HepG2 (cell line): ENCODE measurements at regions of chr3 and their contacts with region 1.

Region 1: DNA sequence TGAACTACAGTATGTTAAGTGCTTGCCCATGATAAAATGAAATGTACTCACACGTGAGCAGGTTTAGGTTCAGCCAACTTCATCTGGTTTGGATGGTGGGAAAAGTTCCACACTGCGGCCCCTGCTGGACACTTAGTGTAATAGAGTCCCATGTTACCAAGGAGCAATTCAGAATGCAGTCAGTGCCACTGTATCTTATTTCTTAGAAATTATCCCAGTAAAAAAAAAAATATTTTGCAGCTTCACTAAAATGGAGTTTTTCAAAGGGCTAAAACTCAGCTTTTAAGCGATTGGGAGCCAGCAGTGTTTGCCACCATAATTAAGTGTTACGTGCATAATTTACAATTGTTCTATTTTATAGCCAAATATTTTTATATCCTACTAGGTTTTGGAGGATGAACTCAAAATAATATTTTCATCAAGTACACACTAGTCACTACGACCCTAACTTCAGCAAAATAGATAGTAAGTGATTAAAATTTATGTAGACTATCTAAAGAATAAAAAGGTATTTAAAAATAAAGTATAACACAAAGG is 371.7 kb upstream of the GBE1 start:
- DNase-seq: peak; percentile 42
- ATAC-seq: peak; percentile 90
- H3K4me3 ChIP-seq: no peak overlapping the region
- H3K27ac ChIP-seq: no peak overlapping the region
- H3K4me1 ChIP-seq: peaks cover 12% of the 10 kb centered on the region
- H3K27me3 ChIP-seq: no peaks in the 10 kb centered on the region
- CTCF ChIP-seq: peak; percentile 71
- EP300 ChIP-seq: no peak
- POLR2A ChIP-seq: no peak
- RAD21 ChIP-seq: no peak

Region 2: GRCh38 chr3:81490541-81491288 is 642.4 kb before region 1 on chr3:
- CTCF ChIA-PET with region 1: no interaction called
- POLR2A ChIA-PET with region 1: no interaction called
- in situ Hi-C with region 1: no loop called
- intact Hi-C with region 1: loop called (anchors 10 kb)
- DNase-seq: peak; percentile 81
- ATAC-seq: peak; percentile 99
- H3K4me3 ChIP-seq: no peak overlapping the region
- H3K27ac ChIP-seq: no peak overlapping the region
- H3K4me1 ChIP-seq: no peaks in the 10 kb centered on the region
- H3K27me3 ChIP-seq: no peaks in the 10 kb centered on the region
- CTCF ChIP-seq: peak; percentile 78
- EP300 ChIP-seq: no peak
- POLR2A ChIP-seq: no peak
- RAD21 ChIP-seq: peak; percentile 41; the same call in 1 of the 2 replicates

Region 3: GRCh38 chr3:81666493-81667121 is 466.5 kb before region 1 on chr3:
- CTCF ChIA-PET with region 1: interaction called, 3 read pairs
- POLR2A ChIA-PET with region 1: no interaction called
- in situ Hi-C with region 1: loop called (anchors 25 kb)
- intact Hi-C with region 1: loop called (anchors 10 kb)
- DNase-seq: no peak
- ATAC-seq: no peak
- H3K4me3 ChIP-seq: no peak overlapping the region
- H3K27ac ChIP-seq: no peak overlapping the region
- H3K4me1 ChIP-seq: no peaks in the 10 kb centered on the region
- H3K27me3 ChIP-seq: no peaks in the 10 kb centered on the region
- CTCF ChIP-seq: peak; percentile 50
- EP300 ChIP-seq: no peak
- POLR2A ChIP-seq: no peak
- RAD21 ChIP-seq: 0 out of 2 replicates have a peak, but pooled peaks have one; percentile 12

Region 4: GRCh38 chr3:81723732-81724313 is 409.3 kb before region 1 on chr3:
- CTCF ChIA-PET with region 1: no interaction called
- POLR2A ChIA-PET with region 1: no interaction called
- in situ Hi-C with region 1: no loop called
- intact Hi-C with region 1: no loop called
- DNase-seq: peak; percentile 41
- ATAC-seq: peak; percentile 95
- H3K4me3 ChIP-seq: no peak overlapping the region; a peak in 1 of 6 replicates
- H3K27ac ChIP-seq: peak overlapping the region; percentile 61
- H3K4me1 ChIP-seq: peaks cover 18% of the 10 kb centered on the region
- H3K27me3 ChIP-seq: no peaks in the 10 kb centered on the region
- CTCF ChIP-seq: no peak
- EP300 ChIP-seq: no peak
- POLR2A ChIP-seq: no peak
- RAD21 ChIP-seq: no peak

Region 5: GRCh38 chr3:81910244-81910852 is 222.8 kb before region 1 on chr3:
- CTCF ChIA-PET with region 1: interaction called, 4 read pairs
- POLR2A ChIA-PET with region 1: no interaction called
- in situ Hi-C with region 1: no loop called
- intact Hi-C with region 1: loop called (anchors 2 kb)
- DNase-seq: peak; percentile 46
- ATAC-seq: peak; percentile 73
- H3K4me3 ChIP-seq: no peak overlapping the region
- H3K27ac ChIP-seq: no peak overlapping the region
- H3K4me1 ChIP-seq: no peaks in the 10 kb centered on the region
- H3K27me3 ChIP-seq: no peaks in the 10 kb centered on the region
- CTCF ChIP-seq: peak; percentile 73
- EP300 ChIP-seq: no peak
- POLR2A ChIP-seq: no peak
- RAD21 ChIP-seq: no peak

Region 6: GRCh38 chr3:82067420-82067819 is 65.7 kb before region 1 on chr3:
- CTCF ChIA-PET with region 1: no interaction called
- POLR2A ChIA-PET with region 1: no interaction called
- in situ Hi-C with region 1: no loop called
- intact Hi-C with region 1: loop called (anchors 5 kb)
- DNase-seq: no peak
- ATAC-seq: no peak
- H3K4me3 ChIP-seq: no peak overlapping the region
- H3K27ac ChIP-seq: no peak overlapping the region
- H3K4me1 ChIP-seq: peaks cover 22% of the 10 kb centered on the region
- H3K27me3 ChIP-seq: no peaks in the 10 kb centered on the region
- CTCF ChIP-seq: no peak
- EP300 ChIP-seq: no peak
- POLR2A ChIP-seq: no peak
- RAD21 ChIP-seq: no peak

Region 7: DNA sequence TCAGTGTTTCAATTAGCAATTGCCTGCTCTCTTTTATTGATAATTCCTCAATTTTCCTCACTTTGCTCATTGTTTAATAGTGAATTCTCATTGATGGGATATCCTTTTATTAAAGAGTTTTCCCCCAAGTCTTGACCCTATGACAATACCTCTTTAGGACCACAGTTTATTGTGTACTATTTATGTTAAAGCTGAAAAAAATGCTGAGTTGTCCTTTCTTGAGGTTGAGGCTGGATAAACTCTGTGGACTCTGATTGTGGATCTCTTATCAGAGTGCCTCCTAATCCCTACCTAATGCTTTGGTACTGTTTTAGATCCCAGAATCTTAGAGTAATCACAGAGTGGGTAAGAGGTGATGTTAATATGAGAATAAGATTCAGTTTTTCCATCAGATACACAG is 44.6 kb after region 1 on chr3:
- CTCF ChIA-PET with region 1: no interaction called
- POLR2A ChIA-PET with region 1: no interaction called
- in situ Hi-C with region 1: no loop called
- intact Hi-C with region 1: no loop called
- DNase-seq: no peak
- ATAC-seq: no peak
- H3K4me3 ChIP-seq: no peak overlapping the region
- H3K27ac ChIP-seq: no peak overlapping the region
- H3K4me1 ChIP-seq: no peaks in the 10 kb centered on the region
- H3K27me3 ChIP-seq: no peaks in the 10 kb centered on the region
- CTCF ChIP-seq: no peak
- EP300 ChIP-seq: no peak
- POLR2A ChIP-seq: no peak
- RAD21 ChIP-seq: no peak

Region 8: GRCh38 chr3:82240322-82240721 is 107.2 kb after region 1 on chr3:
- CTCF ChIA-PET with region 1: no interaction called
- POLR2A ChIA-PET with region 1: no interaction called
- in situ Hi-C with region 1: no loop called
- intact Hi-C with region 1: no loop called
- DNase-seq: no peak
- ATAC-seq: no peak
- H3K4me3 ChIP-seq: no peak overlapping the region
- H3K27ac ChIP-seq: no peak overlapping the region
- H3K4me1 ChIP-seq: no peaks in the 10 kb centered on the region
- H3K27me3 ChIP-seq: no peaks in the 10 kb centered on the region
- CTCF ChIP-seq: no peak
- EP300 ChIP-seq: no peak
- POLR2A ChIP-seq: no peak
- RAD21 ChIP-seq: no peak